ENCODE measurements at regions of chr16 and their contacts with region 1.

Region 1: GRCh38 chr16:69339289-69340108 is at the starts of genes COG8 and NIP7:
- DNase-seq: peak; percentile 98
- H3K4me3 Mint-ChIP-seq: peak within 1 kb of the TSS; percentile 98
- H3K27ac Mint-ChIP-seq: peak within 1 kb of the TSS; percentile 99
- H3K4me1 Mint-ChIP-seq: peaks cover 40% of the 10 kb centered on the region
- H3K27me3 Mint-ChIP-seq: no peaks in the 10 kb centered on the region
- total RNA-seq, gene COG8: 44.1 and 44.6 TPM in 2 replicates
- total RNA-seq, gene NIP7: 81.2 and 84.8 TPM in 2 replicates

Region 2: GRCh38 chr16:69301861-69302260 is 37.6 kb before region 1 on chr16:
- intact Hi-C with region 1: no loop called
- DNase-seq: no peak
- H3K4me3 Mint-ChIP-seq: no peak overlapping the region
- H3K27ac Mint-ChIP-seq: no peak overlapping the region
- H3K4me1 Mint-ChIP-seq: peaks cover 2% of the 10 kb centered on the region
- H3K27me3 Mint-ChIP-seq: no peaks in the 10 kb centered on the region

Region 3: GRCh38 chr16:69386596-69386995 is 47.1 kb after region 1 on chr16:
- intact Hi-C with region 1: loop called (anchors 1 kb)
- DNase-seq: no peak
- H3K4me3 Mint-ChIP-seq: no peak overlapping the region
- H3K27ac Mint-ChIP-seq: peak overlapping the region; percentile 87
- H3K4me1 Mint-ChIP-seq: peaks cover 21% of the 10 kb centered on the region
- H3K27me3 Mint-ChIP-seq: no peaks in the 10 kb centered on the region

Measured in activated CD4-positive, alpha-beta T cell treated with anti-CD3 and anti-CD28 coated beads, Interleukin-2, amount 10 ng/mL, durations not matched to agents 24 days and 14 days (primary cell).